Activated CD4-positive, alpha-beta T cell treated with anti-CD3 and anti-CD28 coated beads for 36 hours (primary cell): ENCODE measurements at regions of chr1 and their contacts with region 1.

Region 1: DNA sequence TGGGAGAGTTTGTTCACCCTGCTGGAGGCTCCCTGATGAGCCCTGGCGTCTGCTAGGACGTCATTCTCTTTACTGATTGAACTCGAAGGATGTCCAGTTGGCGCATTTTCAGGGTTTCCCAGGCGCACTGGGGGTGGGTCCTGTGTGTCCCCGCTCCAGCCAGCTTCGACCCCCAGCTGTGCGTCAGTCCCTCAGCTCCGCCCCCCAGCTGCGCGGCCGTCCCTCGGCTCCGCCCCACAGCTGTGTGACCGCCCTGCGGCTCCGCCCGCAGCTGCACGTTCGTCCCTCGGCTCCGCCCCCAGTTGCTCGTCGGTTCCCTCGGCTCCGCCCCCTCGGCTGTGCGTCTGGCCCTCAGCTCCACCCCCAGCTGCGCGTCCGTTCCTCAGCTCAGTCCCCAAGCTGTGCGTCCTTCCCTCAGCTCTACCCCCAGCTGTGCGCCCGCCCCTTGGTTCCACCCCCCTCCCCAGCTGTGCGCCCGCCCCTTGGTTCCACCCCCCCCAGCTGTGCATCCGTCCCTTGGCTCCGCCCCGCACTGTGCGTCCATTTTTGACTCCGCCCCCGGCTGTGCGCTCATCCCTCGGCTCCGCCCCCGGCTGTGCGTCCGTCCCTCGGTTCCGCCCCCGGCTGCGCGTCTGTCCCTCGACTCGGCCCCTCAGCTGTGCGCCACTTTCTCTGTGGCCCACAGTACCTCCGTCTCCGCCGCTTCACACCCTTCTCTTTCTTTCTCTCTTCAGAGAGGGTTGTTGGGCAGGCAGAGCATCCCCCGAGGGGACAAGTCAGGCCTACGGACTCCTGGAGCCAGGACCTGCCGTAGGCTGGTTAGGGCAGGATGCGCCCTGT is 61.3 kb downstream of the FAAP20 start:
- DNase-seq: peak; percentile 99
- ATAC-seq: peak; percentile 94
- H3K4me3 Mint-ChIP-seq: peak overlapping the region; percentile 68
- H3K27ac Mint-ChIP-seq: peak overlapping the region; percentile 82
- H3K4me1 Mint-ChIP-seq: peaks cover 14% of the 10 kb centered on the region
- H3K27me3 Mint-ChIP-seq: no peaks in the 10 kb centered on the region

Region 2: GRCh38 chr1:1919304-1920056 is 213.8 kb before region 1 on chr1:
- CTCF ChIA-PET with region 1: no interaction called
- POLR2A ChIA-PET with region 1: no interaction called
- intact Hi-C with region 1: loop called (anchors 1 kb)
- DNase-seq: peak; percentile 100
- ATAC-seq: peak; percentile 92
- H3K4me3 Mint-ChIP-seq: peak overlapping the region; percentile 62
- H3K27ac Mint-ChIP-seq: no peak overlapping the region
- H3K4me1 Mint-ChIP-seq: peaks cover 4% of the 10 kb centered on the region
- H3K27me3 Mint-ChIP-seq: no peaks in the 10 kb centered on the region

Region 3: GRCh38 chr1:2174348-2175054 is 41.2 kb after region 1 on chr1:
- CTCF ChIA-PET with region 1: interaction called, 8 read pairs
- POLR2A ChIA-PET with region 1: interaction called, 3 read pairs
- intact Hi-C with region 1: loop called in 1 of 2 experiments (anchors 1 kb)
- DNase-seq: peak; percentile 73
- ATAC-seq: peak; percentile 80
- H3K4me3 Mint-ChIP-seq: peak overlapping the region; percentile 61
- H3K27ac Mint-ChIP-seq: peak overlapping the region; percentile 52
- H3K4me1 Mint-ChIP-seq: peaks cover 2% of the 10 kb centered on the region
- H3K27me3 Mint-ChIP-seq: no peaks in the 10 kb centered on the region

Region 4: GRCh38 chr1:2227346-2228153 is 94.3 kb after region 1 on chr1:
- CTCF ChIA-PET with region 1: interaction called, 4 read pairs
- POLR2A ChIA-PET with region 1: no interaction called
- intact Hi-C with region 1: loop called in 1 of 2 experiments (anchors 1 kb)
- DNase-seq: peak; percentile 98
- ATAC-seq: peak; percentile 94
- H3K4me3 Mint-ChIP-seq: peak overlapping the region; percentile 32
- H3K27ac Mint-ChIP-seq: no peak overlapping the region
- H3K4me1 Mint-ChIP-seq: peaks cover 6% of the 10 kb centered on the region
- H3K27me3 Mint-ChIP-seq: no peaks in the 10 kb centered on the region

Region 5: DNA sequence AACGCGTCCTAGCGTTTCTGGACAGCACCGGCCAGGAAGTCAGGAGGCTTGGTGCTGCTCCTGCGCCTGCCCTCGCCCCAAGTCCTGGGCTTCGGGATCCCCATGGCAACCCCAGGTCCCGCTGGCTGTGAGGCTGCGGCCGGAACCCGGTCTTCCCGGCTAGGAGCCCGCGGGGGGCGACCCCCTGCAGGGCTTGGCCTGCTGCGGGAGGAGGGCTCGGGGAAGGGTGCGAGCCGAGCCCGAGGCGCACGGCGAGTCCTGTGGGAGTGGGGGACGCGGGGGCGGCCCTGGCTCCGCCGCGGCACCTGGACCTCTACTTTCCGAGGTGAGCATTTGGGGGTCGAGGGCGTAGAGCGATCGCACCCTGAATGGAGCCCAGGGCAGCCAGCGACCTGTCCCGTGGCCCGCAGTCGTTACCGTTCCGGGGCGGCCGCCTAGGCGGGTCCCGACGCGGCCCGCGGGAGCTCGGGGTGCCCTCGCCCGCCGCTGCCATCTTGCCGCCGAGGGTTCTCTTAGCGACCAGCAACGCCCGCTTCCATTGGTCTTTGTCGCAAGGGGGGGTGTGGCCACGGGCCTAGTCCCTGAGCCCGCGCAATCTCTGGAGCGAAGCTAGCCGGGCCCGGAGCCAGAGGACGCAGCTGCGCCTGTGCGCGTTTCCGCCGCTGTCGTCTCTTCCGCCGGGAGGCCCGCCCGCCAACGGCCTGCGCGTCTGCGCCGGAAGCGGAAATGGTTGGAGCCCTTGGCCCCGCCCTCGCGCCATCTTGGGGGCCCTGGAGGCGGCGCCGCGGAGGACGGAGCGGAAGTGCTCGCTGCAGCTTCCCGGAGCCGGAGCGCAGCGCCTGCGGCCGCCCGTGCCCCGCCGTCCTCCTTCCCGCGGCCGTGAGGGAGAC is 258.0 kb after region 1 on chr1 and contains the starts of genes MORN1 and RER1:
- CTCF ChIA-PET with region 1: interaction called, 6 read pairs
- POLR2A ChIA-PET with region 1: no interaction called
- intact Hi-C with region 1: loop called in 1 of 2 experiments (anchors 1 kb)
- DNase-seq: peak; percentile 100
- ATAC-seq: peak; percentile 99
- H3K4me3 Mint-ChIP-seq: peak within 1 kb of the TSS; percentile 89
- H3K27ac Mint-ChIP-seq: peak within 1 kb of the TSS; percentile 76
- H3K4me1 Mint-ChIP-seq: peaks cover 38% of the 10 kb centered on the region
- H3K27me3 Mint-ChIP-seq: no peaks in the 10 kb centered on the region
- total RNA-seq, gene MORN1: 5.1 to 6.1 TPM
- total RNA-seq, gene RER1: 146 to 152 TPM

Region 6: DNA sequence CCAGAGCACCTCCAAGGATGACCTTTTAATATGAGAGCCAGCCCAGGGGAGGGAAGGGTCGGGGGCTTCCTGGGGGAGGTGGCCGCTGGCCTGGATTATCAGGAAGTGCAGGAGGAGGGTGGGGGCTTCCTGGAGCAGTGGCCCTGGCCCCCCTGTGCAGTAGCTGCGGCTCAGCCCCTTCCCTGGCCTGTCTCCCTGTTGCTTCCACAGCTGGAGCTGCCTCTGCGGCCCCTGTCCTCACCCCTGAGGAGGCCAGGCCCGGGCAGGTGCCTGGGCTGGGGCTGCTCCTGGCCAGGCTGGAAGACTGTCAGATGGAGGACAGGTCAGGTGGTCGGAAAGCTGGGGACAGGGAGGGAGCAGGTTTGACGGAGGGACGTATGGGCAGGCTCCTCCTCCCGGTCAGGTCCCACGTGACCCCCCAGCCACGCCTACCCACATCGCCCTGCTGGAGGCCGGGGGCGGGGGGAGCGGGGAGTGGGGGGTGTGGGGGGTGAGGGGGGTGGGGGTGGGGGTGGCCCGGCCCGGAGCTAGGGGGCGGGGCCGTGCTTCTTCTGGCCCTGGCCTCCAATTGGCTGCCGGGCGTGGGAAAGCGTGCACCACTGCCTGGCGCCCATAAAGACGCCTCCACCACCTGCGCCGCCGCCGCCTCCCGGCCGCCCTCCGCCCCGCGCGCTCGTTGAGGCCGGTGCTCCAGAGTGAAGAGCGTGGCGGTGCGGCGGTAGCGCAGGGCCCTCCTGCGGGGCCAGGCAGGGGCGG is 412.7 kb after region 1 on chr1:
- CTCF ChIA-PET with region 1: interaction called, 3 read pairs
- POLR2A ChIA-PET with region 1: no interaction called
- intact Hi-C with region 1: loop called in 1 of 2 experiments (anchors 1 kb)
- DNase-seq: peak; percentile 94
- ATAC-seq: peak; percentile 34
- H3K4me3 Mint-ChIP-seq: peak overlapping the region; percentile 78
- H3K27ac Mint-ChIP-seq: no peak overlapping the region
- H3K4me1 Mint-ChIP-seq: peaks cover 16% of the 10 kb centered on the region
- H3K27me3 Mint-ChIP-seq: no peaks in the 10 kb centered on the region